ENCODE measurements at regions of chr21 and their contacts with region 1.

Region 1: GRCh38 chr21:46634966-46635323 is 529 bp upstream of the PRMT2 start:
- DNase-seq: peak in 2 of 4 experiments; percentile 79 to 90
- ATAC-seq: peak; percentile 60
- H3K4me3 ChIP-seq: peak overlapping the region; percentile 63
- H3K27ac ChIP-seq: peak overlapping the region; percentile 97
- H3K4me1 ChIP-seq: peaks cover 14 to 25% of the 10 kb centered on the region in 2 experiments; a peak in 4 of 5 replicates
- H3K27me3 ChIP-seq: no peaks in the 10 kb centered on the region
- CTCF ChIP-seq: peak; percentile 1 to 51 (median 32); a peak in 2 of 6 replicates
- EP300 ChIP-seq: no peak
- POLR2A ChIP-seq: no peak
- RAD21 ChIP-seq: peak; percentile 17 to 22; a peak in 2 of 4 replicates

Region 2: DNA sequence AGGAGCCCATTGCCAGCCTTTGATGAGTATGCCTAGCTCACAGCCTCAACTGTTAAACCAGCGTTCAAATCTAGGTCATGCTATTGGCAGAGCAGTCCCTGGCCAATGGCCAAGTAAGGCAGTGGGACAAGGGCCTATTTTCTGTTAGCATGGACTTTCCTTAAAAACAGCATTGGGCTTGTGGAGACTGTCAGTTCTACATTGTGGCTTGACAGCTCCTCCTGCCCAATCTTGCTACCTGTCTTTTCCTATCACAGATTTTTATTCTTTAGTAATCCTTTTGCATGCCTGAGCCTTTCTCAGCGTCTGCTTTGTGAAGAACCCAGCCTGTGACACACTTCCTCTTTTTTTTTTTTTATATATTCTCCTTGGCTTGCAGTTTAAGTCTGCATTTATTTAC is 119.8 kb before region 1 on chr21:
- CTCF ChIA-PET with region 1: no interaction called
- POLR2A ChIA-PET with region 1: no interaction called
- in situ Hi-C with region 1: no loop called
- intact Hi-C with region 1: no loop called
- DNase-seq: no peak
- ATAC-seq: no peak
- H3K4me3 ChIP-seq: no peak overlapping the region
- H3K27ac ChIP-seq: no peak overlapping the region
- H3K4me1 ChIP-seq: peaks cover 3 to 13% of the 10 kb centered on the region in 2 experiments
- H3K27me3 ChIP-seq: no peaks in the 10 kb centered on the region
- CTCF ChIP-seq: no peak
- EP300 ChIP-seq: no peak
- POLR2A ChIP-seq: no peak
- RAD21 ChIP-seq: no peak

Region 3: GRCh38 chr21:46622226-46622625 is 12.7 kb before region 1 on chr21:
- CTCF ChIA-PET with region 1: no interaction called
- POLR2A ChIA-PET with region 1: interaction called, 17 read pairs
- in situ Hi-C with region 1: no loop called
- intact Hi-C with region 1: no loop called
- DNase-seq: no peak
- ATAC-seq: no peak
- H3K4me3 ChIP-seq: no peak overlapping the region
- H3K27ac ChIP-seq: no peak overlapping the region
- H3K4me1 ChIP-seq: peaks cover 0 to 6% of the 10 kb centered on the region in 2 experiments; a peak in 3 of 5 replicates
- H3K27me3 ChIP-seq: peaks cover 12 to 22% of the 10 kb centered on the region in 2 experiments
- CTCF ChIP-seq: no peak
- EP300 ChIP-seq: no peak
- POLR2A ChIP-seq: no peak
- RAD21 ChIP-seq: no peak